ENCODE measurements at regions of chr12 and their contacts with region 1.

Region 1: DNA sequence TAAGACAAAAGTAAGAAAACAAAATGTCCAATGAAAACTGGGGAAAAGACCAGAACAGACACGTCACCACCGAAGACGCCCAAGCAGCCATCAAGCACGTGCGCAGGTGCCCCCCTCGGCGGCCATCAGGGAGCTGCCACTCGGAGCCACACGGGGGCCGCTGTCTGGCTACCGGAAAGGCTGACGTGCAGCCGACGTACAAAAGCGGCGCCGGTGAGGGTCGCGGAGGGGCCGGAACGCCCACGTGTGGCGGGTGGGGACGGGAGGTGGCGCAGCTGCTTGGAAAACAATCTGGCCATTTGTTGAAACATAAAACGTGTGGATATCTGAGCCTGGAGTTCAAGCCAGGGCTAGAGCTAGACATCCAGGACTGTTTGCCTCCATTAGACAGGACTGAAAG is 60.7 kb downstream of the GALNT9 start:
- DNase-seq: no peak
- H3K4me3 ChIP-seq: no peak overlapping the region
- H3K27ac ChIP-seq: no peak overlapping the region
- H3K4me1 ChIP-seq: no peaks in the 10 kb centered on the region
- H3K27me3 ChIP-seq: no peaks in the 10 kb centered on the region
- CTCF ChIP-seq: no peak
- POLR2A ChIP-seq: no peak

Region 2: GRCh38 chr12:131351319-131352028 is 917.2 kb before region 1 on chr12:
- intact Hi-C with region 1: no loop called
- DNase-seq: no peak
- H3K4me3 ChIP-seq: no peak overlapping the region
- H3K27ac ChIP-seq: no peak overlapping the region
- H3K4me1 ChIP-seq: no peaks in the 10 kb centered on the region
- H3K27me3 ChIP-seq: no peaks in the 10 kb centered on the region
- CTCF ChIP-seq: no peak
- POLR2A ChIP-seq: no peak

Region 3: DNA sequence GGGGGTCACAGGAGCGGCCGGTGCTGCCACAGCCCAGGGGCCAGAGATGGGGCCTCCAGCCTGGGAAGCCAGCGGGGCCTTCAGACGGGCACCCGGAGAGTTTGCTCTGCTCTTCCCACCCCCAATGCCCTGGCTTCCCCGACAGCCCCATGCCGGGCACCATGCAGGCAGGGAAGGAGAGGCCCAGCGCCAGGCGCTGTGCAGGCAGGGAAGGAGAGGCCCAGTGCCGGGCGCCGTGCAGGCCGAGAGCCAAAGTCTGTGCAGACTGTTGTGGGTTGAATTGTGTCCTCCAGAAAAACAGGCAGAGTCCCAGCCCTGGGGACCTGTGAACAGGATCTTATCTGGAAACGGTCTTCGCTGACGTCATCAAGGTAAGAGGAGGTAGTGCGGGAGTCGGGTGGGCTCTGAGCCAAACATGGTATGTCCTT is 26.4 kb after region 1 on chr12:
- intact Hi-C with region 1: no loop called
- DNase-seq: no peak
- H3K4me3 ChIP-seq: no peak overlapping the region
- H3K27ac ChIP-seq: no peak overlapping the region
- H3K4me1 ChIP-seq: no peaks in the 10 kb centered on the region
- H3K27me3 ChIP-seq: no peaks in the 10 kb centered on the region
- CTCF ChIP-seq: no peak
- POLR2A ChIP-seq: no peak

Region 4: DNA sequence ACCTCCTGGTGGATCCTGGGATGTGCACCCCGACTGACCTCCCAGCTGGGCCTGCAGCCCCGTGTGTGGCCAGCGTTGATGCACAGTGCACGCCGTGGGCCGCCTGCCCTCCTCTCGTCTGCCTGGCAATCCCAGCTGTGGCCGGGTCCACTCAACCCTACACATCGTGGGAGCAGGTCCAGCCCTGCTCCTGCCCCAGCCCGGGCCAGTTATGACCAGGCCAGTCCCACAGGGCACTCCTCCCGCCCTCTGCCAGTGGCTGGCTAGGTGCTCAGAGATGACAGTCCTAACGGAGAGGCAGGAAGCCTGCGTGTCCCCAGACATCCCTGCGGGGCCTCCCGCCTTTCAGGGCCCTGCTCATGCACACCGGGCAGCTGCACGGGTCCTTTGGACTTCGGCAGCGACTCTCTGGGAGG is 50.0 kb after region 1 on chr12:
- intact Hi-C with region 1: loop called (anchors 1 kb)
- DNase-seq: no peak
- H3K4me3 ChIP-seq: no peak overlapping the region
- H3K27ac ChIP-seq: no peak overlapping the region
- H3K4me1 ChIP-seq: no peaks in the 10 kb centered on the region
- H3K27me3 ChIP-seq: no peaks in the 10 kb centered on the region
- CTCF ChIP-seq: no peak
- POLR2A ChIP-seq: no peak

Region 5: GRCh38 chr12:132560614-132561426 is 292.1 kb after region 1 on chr12:
- intact Hi-C with region 1: no loop called
- DNase-seq: no peak
- H3K4me3 ChIP-seq: peak overlapping the region; percentile 68 to 79
- H3K27ac ChIP-seq: no peak overlapping the region
- H3K4me1 ChIP-seq: peaks cover 28% of the 10 kb centered on the region
- H3K27me3 ChIP-seq: no peaks in the 10 kb centered on the region
- CTCF ChIP-seq: peak; percentile 34 to 54 (median 36)
- POLR2A ChIP-seq: no peak

Measured in vagina (tissue), 2 donors.